WTC11 (cell line): ENCODE measurements at regions of chr16 and their contacts with region 1.

Region 1: GRCh38 chr16:74862741-74863244 is 88.2 kb upstream of the FA2H start:
- DNase-seq: no peak
- ATAC-seq: peak; percentile 27; the same call in 1 of the 2 replicates
- H3K4me3 Mint-ChIP-seq: no peak overlapping the region
- H3K27ac Mint-ChIP-seq: peak overlapping the region; percentile 77; the same call in 1 of the 2 replicates
- H3K4me1 Mint-ChIP-seq: peaks cover 43% of the 10 kb centered on the region
- H3K27me3 Mint-ChIP-seq: no peaks in the 10 kb centered on the region
- CTCF ChIP-seq: peak; percentile 70

Region 2: GRCh38 chr16:74666425-74667254 is 196.2 kb before region 1 on chr16 and contains the start of gene RFWD3:
- CTCF ChIA-PET with region 1: interaction called, 26 read pairs
- POLR2A ChIA-PET with region 1: interaction called, 4 read pairs
- DNase-seq: peak; percentile 96
- ATAC-seq: peak; percentile 99
- H3K4me3 Mint-ChIP-seq: peak within 1 kb of the TSS; percentile 85
- H3K27ac Mint-ChIP-seq: peak within 1 kb of the TSS; percentile 93
- H3K4me1 Mint-ChIP-seq: peaks cover 17% of the 10 kb centered on the region
- H3K27me3 Mint-ChIP-seq: peaks cover 4% of the 10 kb centered on the region
- CTCF ChIP-seq: no peak
- total RNA-seq, gene RFWD3: 78.8 to 109 TPM (median 86.2 TPM) in 3 replicates

Region 3: GRCh38 chr16:74716355-74716754 is 146.4 kb before region 1 on chr16:
- CTCF ChIA-PET with region 1: interaction called, 62 read pairs
- POLR2A ChIA-PET with region 1: interaction called, 7 read pairs
- DNase-seq: peak; percentile 44
- ATAC-seq: peak; percentile 47
- H3K4me3 Mint-ChIP-seq: no peak overlapping the region
- H3K27ac Mint-ChIP-seq: no peak overlapping the region
- H3K4me1 Mint-ChIP-seq: no peaks in the 10 kb centered on the region
- H3K27me3 Mint-ChIP-seq: no peaks in the 10 kb centered on the region
- CTCF ChIP-seq: no peak

Region 4: DNA sequence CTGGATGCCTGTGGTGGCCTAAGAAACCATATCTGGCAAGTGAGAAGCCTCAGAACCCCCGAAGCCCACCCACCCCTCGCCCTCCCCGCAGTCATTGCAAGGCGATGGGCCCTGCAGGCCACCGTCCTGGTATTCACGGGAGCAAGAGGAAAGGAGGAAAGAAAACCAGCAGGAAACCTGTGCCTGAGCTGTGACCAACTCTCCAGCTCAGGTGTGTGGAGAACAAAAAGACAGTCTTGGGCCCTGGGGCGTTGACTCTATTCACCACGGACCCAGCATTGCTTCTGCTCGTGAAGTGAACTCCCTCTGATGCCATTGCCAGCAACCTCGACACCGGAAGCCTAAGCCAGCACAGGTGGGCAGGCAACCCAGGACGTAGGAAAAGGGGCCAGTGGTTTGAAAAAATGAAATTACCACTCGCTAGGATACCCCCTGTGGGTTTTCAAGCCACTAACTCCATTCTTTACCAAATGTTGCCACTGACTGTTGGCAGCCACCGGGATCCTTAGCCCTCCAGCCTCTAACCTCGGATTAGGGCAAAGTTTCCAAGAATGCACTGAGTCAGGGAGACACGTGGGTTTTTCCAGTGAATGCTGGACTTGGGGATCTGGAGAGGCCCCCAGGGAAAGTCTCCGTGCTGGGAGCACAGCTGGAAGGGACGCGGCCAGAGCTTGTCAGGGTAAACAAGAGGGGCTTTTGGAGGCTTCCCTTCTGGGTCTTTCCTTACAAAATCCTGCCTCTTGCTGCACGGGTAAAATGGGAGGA is 113.3 kb before region 1 on chr16:
- CTCF ChIA-PET with region 1: interaction called, 10 read pairs
- POLR2A ChIA-PET with region 1: no interaction called
- DNase-seq: no peak
- ATAC-seq: peak; percentile 67
- H3K4me3 Mint-ChIP-seq: no peak overlapping the region
- H3K27ac Mint-ChIP-seq: no peak overlapping the region
- H3K4me1 Mint-ChIP-seq: peaks cover 22% of the 10 kb centered on the region
- H3K27me3 Mint-ChIP-seq: no peaks in the 10 kb centered on the region
- CTCF ChIP-seq: no peak

Region 5: DNA sequence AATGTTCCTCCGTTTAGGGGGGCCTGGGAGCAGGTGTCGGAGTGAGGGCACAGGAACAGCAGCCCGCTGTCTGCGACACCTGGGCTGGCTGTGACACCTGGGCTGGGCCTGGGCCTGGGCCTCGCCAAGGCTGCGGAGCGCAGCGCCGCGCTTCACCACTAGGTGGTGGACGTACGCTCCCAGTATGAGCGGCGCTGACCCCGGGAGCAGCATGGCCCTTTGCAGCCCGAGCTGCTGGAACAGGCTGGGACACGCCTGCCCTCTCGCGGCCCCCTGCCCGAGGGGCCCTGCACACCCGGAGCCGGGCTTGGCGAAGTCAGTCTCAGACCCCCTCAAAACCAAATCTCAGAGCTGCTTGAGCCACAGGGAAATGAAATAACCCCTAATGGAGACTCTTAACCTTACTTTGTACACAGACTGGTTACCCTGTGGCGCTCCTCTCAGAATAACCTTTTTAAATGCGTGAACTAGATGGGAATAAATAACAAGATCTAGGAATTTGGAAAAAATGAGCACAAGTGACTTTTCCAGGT is 49.6 kb before region 1 on chr16:
- CTCF ChIA-PET with region 1: interaction called, 112 read pairs
- POLR2A ChIA-PET with region 1: no interaction called
- DNase-seq: peak; percentile 96
- ATAC-seq: peak; percentile 98
- H3K4me3 Mint-ChIP-seq: no peak overlapping the region
- H3K27ac Mint-ChIP-seq: no peak overlapping the region
- H3K4me1 Mint-ChIP-seq: peaks cover 36% of the 10 kb centered on the region
- H3K27me3 Mint-ChIP-seq: peaks cover 32% of the 10 kb centered on the region
- CTCF ChIP-seq: peak; percentile 91

Region 6: DNA sequence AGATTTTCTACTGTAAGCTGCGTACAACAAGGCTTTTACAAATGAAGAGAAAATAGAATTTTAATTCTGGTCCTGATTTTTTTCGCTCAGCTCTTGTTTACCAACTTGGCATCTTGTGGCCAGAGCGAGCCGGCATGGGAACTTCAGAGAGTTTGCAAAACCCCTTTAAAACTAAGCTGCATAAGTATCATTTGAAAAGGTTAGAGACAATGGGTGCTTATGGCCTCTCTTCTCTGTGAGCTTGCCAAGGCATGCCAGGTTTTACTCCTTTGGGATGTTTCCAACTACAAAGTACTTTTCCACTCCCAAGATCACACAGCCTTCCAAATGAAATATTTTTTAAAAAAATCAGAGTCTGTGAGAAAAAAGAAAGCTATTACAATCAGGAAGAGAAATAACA is 25.7 kb before region 1 on chr16:
- CTCF ChIA-PET with region 1: interaction called, 22 read pairs
- POLR2A ChIA-PET with region 1: no interaction called
- DNase-seq: no peak
- ATAC-seq: no peak
- H3K4me3 Mint-ChIP-seq: no peak overlapping the region
- H3K27ac Mint-ChIP-seq: no peak overlapping the region
- H3K4me1 Mint-ChIP-seq: peaks cover 14% of the 10 kb centered on the region
- H3K27me3 Mint-ChIP-seq: no peaks in the 10 kb centered on the region
- CTCF ChIP-seq: no peak

Region 7: DNA sequence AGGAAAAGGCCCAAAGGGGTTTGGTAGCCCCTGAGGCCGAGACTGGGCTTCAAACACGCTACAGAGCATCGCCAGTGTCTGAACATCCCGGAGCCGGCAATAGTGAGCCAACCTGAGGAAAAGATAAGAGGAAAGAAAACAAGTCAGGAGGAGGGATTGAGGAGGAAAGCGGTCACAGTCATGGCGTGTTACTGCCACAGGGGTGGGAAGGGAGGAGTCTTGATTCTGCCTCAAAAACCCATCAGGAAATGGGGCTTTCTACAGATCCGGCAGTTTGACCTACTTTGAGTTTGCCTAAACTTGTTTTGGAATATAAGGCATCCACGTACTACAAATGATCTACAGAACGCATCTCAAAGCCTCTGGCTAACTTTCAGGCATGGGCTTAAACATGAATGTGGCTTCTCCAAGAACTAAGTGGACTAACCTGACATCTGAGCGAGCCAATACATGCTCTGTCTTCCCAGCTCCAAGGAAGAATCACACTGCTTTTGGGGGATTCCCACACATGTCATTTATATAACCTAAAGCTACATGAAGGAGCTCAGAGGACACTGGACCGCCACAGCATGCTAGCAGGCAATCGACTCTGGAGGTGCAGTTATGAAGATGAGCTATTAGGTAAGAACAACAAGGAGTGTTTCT is 25.5 kb after region 1 on chr16:
- CTCF ChIA-PET with region 1: no interaction called
- POLR2A ChIA-PET with region 1: no interaction called
- DNase-seq: no peak
- ATAC-seq: no peak
- H3K4me3 Mint-ChIP-seq: no peak overlapping the region
- H3K27ac Mint-ChIP-seq: peak overlapping the region; percentile 76; the same call in 1 of the 2 replicates
- H3K4me1 Mint-ChIP-seq: peaks cover 5% of the 10 kb centered on the region
- H3K27me3 Mint-ChIP-seq: no peaks in the 10 kb centered on the region
- CTCF ChIP-seq: no peak

Region 8: GRCh38 chr16:75110637-75111513 is 248.1 kb after region 1 on chr16:
- CTCF ChIA-PET with region 1: interaction called, 15 read pairs
- POLR2A ChIA-PET with region 1: no interaction called
- DNase-seq: peak; percentile 90
- ATAC-seq: peak; percentile 72
- H3K4me3 Mint-ChIP-seq: peak overlapping the region; percentile 27
- H3K27ac Mint-ChIP-seq: peak overlapping the region; percentile 38
- H3K4me1 Mint-ChIP-seq: peaks cover 53% of the 10 kb centered on the region
- H3K27me3 Mint-ChIP-seq: no peaks in the 10 kb centered on the region
- CTCF ChIP-seq: peak; percentile 80